Transverse colon (tissue), 4 donors: ENCODE measurements at regions of chr22 and their contacts with region 1.

Region 1: DNA sequence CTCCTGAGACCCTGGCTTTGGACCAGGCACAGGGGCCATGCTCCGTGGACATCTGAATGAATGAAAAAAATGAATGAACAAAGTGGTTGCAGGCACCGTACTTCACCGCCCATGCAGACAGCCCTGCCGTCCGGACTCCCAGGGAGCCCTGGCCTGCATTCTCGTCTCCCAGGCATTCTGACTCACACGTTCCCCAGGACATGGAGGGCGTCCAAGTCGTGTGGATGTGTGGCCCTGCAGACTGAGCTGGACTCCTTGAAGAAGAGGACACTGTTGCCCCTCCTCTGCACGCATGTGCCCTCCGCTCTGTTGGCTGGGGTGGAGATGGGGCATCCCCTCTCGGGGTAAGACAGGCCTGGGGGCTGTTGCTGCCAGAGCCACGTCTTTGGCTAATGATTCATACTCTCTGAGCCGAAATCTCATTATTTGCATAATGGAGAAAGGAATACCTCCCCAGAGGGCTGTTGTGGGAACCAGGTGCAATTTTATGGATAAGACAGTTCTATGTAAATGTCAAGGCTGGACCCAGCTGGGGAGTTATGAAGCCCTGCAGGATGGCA is 49.7 kb downstream of the RTL6 start:
- DNase-seq: peak; percentile 48
- H3K4me3 ChIP-seq: no peak overlapping the region
- H3K27ac ChIP-seq: peak overlapping the region in 2 of 4 donors; percentile 20 to 29
- H3K4me1 ChIP-seq: peaks cover 0 to 5% (median 4%) of the 10 kb centered on the region in 4 donors
- H3K27me3 ChIP-seq: no peaks in the 10 kb centered on the region
- CTCF ChIP-seq: no peak
- EP300 ChIP-seq: no peak
- POLR2A ChIP-seq: no peak

Region 2: GRCh38 chr22:43393132-43393843 is 1055.1 kb before region 1 on chr22:
- in situ Hi-C with region 1: no loop called
- intact Hi-C with region 1: loop called (anchors 5 kb)
- DNase-seq: no peak
- H3K4me3 ChIP-seq: no peak overlapping the region
- H3K27ac ChIP-seq: no peak overlapping the region
- H3K4me1 ChIP-seq: no peaks in the 10 kb centered on the region
- H3K27me3 ChIP-seq: peaks cover 3% of the 10 kb centered on the region
- CTCF ChIP-seq: no peak
- EP300 ChIP-seq: no peak
- POLR2A ChIP-seq: no peak

Region 3: GRCh38 chr22:44625981-44626687 is 177.8 kb after region 1 on chr22:
- in situ Hi-C with region 1: no loop called
- intact Hi-C with region 1: no loop called
- DNase-seq: peak; percentile 76
- H3K4me3 ChIP-seq: no peak overlapping the region
- H3K27ac ChIP-seq: no peak overlapping the region
- H3K4me1 ChIP-seq: no peaks in the 10 kb centered on the region
- H3K27me3 ChIP-seq: peaks cover 3% of the 10 kb centered on the region
- CTCF ChIP-seq: peak; percentile 97 to 100 (median 99)
- EP300 ChIP-seq: no peak
- POLR2A ChIP-seq: no peak